Posterior cingulate gyrus (tissue), 11 donors: ENCODE measurements at regions of chr12 and their contacts with region 1.

Region 1: GRCh38 chr12:130761537-130762318 is 45.6 kb upstream of the RIMBP2 start:
- DNase-seq: peak; percentile 52 to 96 (median 80)

Region 2: GRCh38 chr12:130818635-130819576 is 57.2 kb after region 1 on chr12:
- intact Hi-C with region 1: loop called (anchors 1 kb)
- DNase-seq: peak; percentile 50 to 95 (median 70)